ENCODE measurements at regions of chr6 and their contacts with region 1.

Region 1: DNA sequence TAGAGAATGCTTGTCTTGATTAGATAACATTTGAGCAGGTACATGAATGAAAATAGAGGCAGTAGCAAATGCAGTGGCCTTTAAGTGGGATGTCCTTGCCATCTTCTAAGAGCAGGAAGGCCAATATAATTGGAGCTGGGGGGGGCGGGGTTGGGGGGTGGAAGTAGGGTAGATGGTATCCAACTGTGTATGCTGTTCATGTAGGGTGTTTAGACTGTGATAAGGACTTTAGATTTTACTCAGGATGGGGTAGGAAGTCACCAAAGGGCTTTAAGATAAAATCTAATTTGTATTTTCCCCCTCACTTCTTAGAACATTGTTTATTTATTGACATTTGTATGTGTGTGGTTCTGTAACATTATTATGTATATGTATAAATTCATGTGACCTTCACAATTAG is 12.0 kb downstream of the TAB2 start:
- DNase-seq: no peak
- ATAC-seq: no peak
- H3K4me3 ChIP-seq: no peak overlapping the region
- H3K4me3 Mint-ChIP-seq: peak overlapping the region in 9 of 10 donors; percentile 10 to 72 (median 38)
- H3K27ac ChIP-seq: no peak overlapping the region
- H3K27ac Mint-ChIP-seq: peak overlapping the region in 5 of 9 donors; percentile 6 to 79 (median 22)
- H3K4me1 ChIP-seq: peaks cover 42 to 58% of the 10 kb centered on the region in 2 donors
- H3K4me1 Mint-ChIP-seq: peaks cover 71 to 98% (median 96%) of the 10 kb centered on the region in 7 donors
- H3K27me3 ChIP-seq: no peaks in the 10 kb centered on the region
- H3K27me3 Mint-ChIP-seq: no peaks in the 10 kb centered on the region

Region 2: GRCh38 chr6:149342525-149342924 is 13.0 kb after region 1 on chr6:
- CTCF ChIA-PET with region 1: interaction called, 3 read pairs
- POLR2A ChIA-PET with region 1: interaction called, 3 read pairs
- intact Hi-C with region 1: loop called (anchors 1 to 2 kb)
- DNase-seq: no peak
- ATAC-seq: peak; percentile 37
- H3K4me3 ChIP-seq: no peak overlapping the region
- H3K4me3 Mint-ChIP-seq: peak overlapping the region in 7 of 10 donors; percentile 4 to 69 (median 35)
- H3K27ac ChIP-seq: no peak overlapping the region
- H3K27ac Mint-ChIP-seq: peak overlapping the region in 7 of 9 donors; percentile 58 to 80 (median 71)
- H3K4me1 ChIP-seq: peaks cover 24 to 30% of the 10 kb centered on the region in 2 donors
- H3K4me1 Mint-ChIP-seq: peaks cover 47 to 94% (median 86%) of the 10 kb centered on the region in 7 donors
- H3K27me3 ChIP-seq: no peaks in the 10 kb centered on the region
- H3K27me3 Mint-ChIP-seq: no peaks in the 10 kb centered on the region

Measured in naive thymus-derived CD4-positive, alpha-beta T cell (primary cell).